ENCODE measurements at regions of chr12 and their contacts with region 1.

Region 1: DNA sequence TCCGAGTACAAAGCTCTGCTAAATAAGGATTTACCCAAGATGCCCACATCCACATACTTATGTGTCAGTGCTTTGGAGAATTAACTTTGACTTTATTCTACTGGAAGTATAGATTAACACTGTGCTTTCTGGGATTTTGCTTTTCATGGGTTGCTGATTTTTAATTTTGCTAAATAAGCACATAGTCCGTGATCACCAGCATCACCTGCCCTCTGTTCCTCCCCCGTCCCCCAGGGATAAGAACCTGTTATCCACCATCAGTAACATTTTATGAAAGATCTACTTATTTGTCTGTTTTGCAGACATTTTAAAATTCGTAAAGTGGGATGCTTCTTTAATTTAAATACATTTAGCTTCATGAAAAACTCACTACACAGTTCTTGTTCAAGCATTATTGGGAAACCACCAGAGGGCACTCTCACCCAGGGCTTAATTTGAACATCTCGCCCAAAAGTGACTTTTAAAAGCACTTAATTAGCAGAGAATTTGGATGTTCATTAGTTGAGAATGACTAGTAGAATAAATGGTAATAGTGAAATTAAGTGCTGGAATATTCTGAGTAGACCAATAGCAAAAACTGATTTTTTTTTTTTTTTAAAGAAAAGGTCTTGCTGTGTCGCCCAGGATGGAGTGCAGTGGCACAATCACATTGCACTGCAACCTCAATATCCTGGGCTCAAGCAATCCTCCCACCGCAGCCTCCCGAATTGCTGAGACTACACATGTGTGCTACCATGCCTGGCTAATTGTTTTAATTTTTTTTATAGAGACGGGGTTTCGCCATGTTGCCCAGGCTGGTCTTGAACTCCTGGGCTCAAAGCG is 35.7 kb downstream of the MRPL42 start:
- DNase-seq: no peak

Region 2: DNA sequence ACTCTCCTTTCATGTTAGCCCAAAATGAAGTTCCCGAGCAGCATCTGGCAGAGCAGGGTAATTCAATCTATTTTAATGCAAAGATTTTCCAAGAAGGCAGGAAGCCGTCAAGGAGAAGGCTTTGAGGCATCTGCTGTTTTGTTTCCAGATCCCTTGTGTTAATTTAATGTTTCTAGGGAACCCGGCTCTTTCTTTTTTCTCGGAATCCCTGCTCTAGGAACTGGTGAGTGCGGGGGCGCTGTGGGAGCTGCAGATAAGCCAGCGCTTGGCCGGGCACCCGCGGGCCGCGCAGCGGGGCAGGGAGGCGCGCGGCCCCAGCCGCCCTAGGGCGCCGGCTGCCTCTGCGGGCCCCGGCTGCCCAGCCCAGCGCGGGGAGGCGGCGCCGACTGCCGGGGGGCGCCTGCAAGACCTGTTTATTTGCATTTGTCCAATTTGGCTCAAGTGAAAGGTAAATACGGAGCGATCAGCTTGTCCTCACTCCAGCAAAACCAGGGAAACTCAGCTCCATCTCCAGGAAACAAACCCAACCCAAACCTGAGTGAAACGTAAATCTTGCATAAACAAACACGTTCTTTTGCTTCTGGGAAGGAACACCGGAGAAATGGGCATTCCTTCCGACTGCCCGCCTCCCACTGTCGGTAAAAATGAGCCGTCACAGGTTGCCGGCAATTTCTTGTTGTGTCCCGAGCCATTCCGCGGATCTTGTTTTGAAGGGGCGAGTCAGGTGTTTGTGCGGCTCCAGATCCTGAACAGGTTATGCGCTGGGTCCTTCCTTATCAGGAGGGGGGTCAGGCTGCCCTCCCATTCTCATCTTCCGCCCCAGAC is 239.3 kb after region 1 on chr12:
- intact Hi-C with region 1: loop called in 1 of 2 experiments (anchors 10 kb)
- DNase-seq: peak; percentile 91

Region 3: GRCh38 chr12:94101738-94102660 is 599.0 kb after region 1 on chr12:
- intact Hi-C with region 1: loop called (anchors 2 to 5 kb)
- DNase-seq: peak; percentile 95